Left cardiac atrium (tissue), 4 donors: ENCODE measurements at regions of chr6 and their contacts with region 1.

Region 1: DNA sequence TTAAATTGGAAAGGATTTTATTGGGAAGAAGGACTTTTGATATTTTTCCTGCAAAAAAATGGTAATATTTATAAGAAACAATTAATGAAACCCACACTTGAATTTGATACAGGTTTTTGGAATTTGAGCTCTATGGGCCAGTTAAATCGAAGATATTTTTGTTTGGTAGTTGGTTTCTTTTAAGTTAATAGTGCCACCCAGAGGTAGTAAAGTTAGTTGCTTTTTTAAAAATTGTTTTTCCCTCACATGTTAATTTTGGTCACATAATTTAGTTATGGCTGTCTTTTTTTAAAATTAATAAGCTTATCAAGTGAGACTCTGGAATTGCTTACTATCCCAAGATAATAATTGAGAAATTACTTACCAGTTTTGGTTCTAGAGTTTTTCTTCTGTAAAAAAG is 7.1 kb downstream of the PRIM2 start:
- DNase-seq: no peak
- ATAC-seq: no peak

Region 2: GRCh38 chr6:57021086-57021720 is 303.3 kb before region 1 on chr6:
- intact Hi-C with region 1: loop called in 1 of 2 experiments (anchors 10 kb)
- DNase-seq: no peak
- ATAC-seq: peak in 1 of 2 donors; percentile 60